Mammary epithelial cell (primary cell): ENCODE measurements at regions of chr12 and their contacts with region 1.

Region 1: DNA sequence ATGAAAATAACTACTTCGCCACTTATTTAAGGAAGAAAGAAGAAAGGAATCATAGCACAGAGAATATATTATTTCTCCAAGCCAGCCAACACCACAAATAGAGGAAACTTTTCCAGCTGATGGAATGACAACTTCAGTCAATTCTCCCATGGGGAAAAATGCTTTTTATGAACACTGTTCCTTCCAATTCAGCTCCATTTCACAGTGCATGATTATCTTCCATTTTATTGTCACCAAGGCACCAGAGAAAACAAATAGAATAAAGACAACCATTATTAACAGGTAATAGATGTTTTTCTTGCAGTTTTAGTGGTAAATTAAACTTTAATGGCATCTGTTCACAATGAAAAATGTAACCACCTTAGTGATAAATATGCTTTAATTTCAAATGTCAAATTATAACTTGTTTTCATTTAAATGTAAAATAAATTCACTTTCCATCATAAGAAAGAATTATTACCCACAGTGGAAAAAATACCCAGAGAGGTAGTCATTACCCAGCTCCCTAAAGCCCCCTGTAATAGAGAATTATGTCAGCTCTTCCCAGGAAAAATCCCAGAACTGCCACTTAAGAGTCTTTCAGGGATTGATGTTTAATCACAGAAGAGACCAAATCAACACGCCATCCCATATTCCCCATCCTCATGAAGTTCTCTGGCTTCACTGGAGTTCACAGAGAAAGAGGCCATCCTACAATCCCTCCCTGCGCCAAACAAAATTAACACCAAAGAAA is 828.3 kb upstream of the TMEM132C start:
- DNase-seq: no peak
- H3K4me3 ChIP-seq: no peak overlapping the region
- H3K27ac ChIP-seq: no peak overlapping the region
- H3K4me1 ChIP-seq: no peaks in the 10 kb centered on the region
- H3K27me3 ChIP-seq: no peaks in the 10 kb centered on the region
- CTCF ChIP-seq: no peak

Region 2: GRCh38 chr12:127245437-127245836 is 193.2 kb before region 1 on chr12:
- CTCF ChIA-PET with region 1: no interaction called
- dilution Hi-C with region 1: no loop called
- in situ Hi-C with region 1: no loop called
- intact Hi-C with region 1: no loop called
- DNase-seq: peak; percentile 77
- H3K4me3 ChIP-seq: no peak overlapping the region
- H3K27ac ChIP-seq: peak overlapping the region; percentile 3
- H3K4me1 ChIP-seq: peaks cover 26% of the 10 kb centered on the region
- H3K27me3 ChIP-seq: no peaks in the 10 kb centered on the region
- CTCF ChIP-seq: no peak

Region 3: GRCh38 chr12:127270193-127270592 is 168.5 kb before region 1 on chr12:
- CTCF ChIA-PET with region 1: no interaction called
- dilution Hi-C with region 1: no loop called
- in situ Hi-C with region 1: no loop called
- intact Hi-C with region 1: no loop called
- DNase-seq: peak; percentile 68
- H3K4me3 ChIP-seq: no peak overlapping the region
- H3K27ac ChIP-seq: peak overlapping the region; percentile 53
- H3K4me1 ChIP-seq: peaks cover 45% of the 10 kb centered on the region
- H3K27me3 ChIP-seq: no peaks in the 10 kb centered on the region
- CTCF ChIP-seq: no peak

Region 4: DNA sequence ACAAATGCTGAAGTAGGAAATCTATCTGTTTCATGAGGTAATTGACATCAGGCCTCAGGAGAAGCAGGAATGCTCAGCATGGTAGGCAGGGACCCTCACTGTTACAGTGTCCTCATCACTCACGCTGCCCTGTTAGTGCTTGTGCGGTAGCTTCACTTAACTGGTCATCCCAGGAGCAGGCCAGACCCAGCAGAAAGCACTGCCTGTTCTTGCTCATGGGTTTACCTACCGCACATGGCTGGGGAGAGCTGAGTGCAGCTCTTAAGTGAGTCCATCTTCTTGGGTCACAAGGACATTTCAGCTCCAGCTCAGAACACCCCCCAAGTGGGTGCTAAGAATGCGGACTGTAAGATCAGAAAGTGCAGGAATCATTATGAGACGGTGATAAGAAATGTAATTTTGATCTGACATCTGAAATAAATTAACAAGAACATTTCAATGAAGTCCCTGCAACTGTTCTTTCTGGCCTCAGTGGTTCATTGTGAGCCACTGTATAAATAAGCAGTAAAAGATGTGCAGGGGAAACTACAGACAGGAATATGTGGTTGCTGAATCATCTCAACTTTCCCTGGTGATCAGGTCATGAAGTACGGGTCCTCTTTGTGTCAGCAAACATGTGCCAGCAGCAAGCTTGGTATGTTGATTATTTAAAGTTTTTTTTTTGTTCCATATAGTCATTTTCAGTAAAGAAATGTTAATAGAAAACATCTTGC is 70.5 kb after region 1 on chr12:
- CTCF ChIA-PET with region 1: no interaction called
- dilution Hi-C with region 1: loop called (anchors 5 kb)
- in situ Hi-C with region 1: no loop called
- intact Hi-C with region 1: loop called (anchors 5 kb)
- DNase-seq: peak; percentile 37
- H3K4me3 ChIP-seq: no peak overlapping the region
- H3K27ac ChIP-seq: no peak overlapping the region
- H3K4me1 ChIP-seq: no peaks in the 10 kb centered on the region
- H3K27me3 ChIP-seq: no peaks in the 10 kb centered on the region
- CTCF ChIP-seq: no peak